ENCODE measurements at regions of chr20 and their contacts with region 1.

Region 1: GRCh38 chr20:17536944-17537444 is 5.8 kb upstream of the BFSP1 start:
- DNase-seq: peak; percentile 86
- H3K4me3 ChIP-seq: no peak overlapping the region
- H3K27ac ChIP-seq: no peak overlapping the region
- H3K4me1 ChIP-seq: peaks cover 3% of the 10 kb centered on the region
- H3K27me3 ChIP-seq: no peaks in the 10 kb centered on the region
- CTCF ChIP-seq: peak; percentile 85 to 86
- POLR2A ChIP-seq: no peak

Region 2: DNA sequence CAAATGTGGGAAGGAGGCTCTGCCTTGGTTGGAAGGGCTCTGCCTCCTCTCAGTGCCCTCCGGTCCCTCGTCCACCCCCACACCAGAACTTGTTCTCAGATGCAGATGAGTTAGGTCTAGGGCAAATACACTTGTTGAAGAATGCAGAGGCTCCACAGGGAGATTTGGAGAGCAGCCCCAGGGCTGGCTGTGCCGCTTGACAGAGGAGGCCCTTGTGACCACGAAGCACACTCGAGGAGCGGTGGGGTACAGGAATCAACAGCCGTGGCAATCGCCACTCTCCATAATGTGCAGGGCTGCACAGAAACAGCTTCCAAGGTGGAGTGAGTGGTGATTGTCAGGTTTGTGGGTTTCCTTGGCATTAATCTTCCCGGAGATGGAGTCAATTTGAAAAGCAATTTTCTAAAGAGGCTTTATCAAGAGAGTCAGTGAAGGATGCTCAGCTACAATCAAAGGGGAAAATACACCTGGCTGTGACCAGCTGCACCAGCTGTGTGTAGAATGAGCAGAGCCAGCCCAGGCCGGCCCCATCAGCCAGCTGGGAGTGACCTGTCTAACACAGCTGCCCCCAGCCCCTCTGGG is 65.3 kb before region 1 on chr20:
- CTCF ChIA-PET with region 1: no interaction called
- POLR2A ChIA-PET with region 1: no interaction called
- dilution Hi-C with region 1: no loop called
- intact Hi-C with region 1: no loop called
- DNase-seq: no peak
- H3K4me3 ChIP-seq: no peak overlapping the region
- H3K27ac ChIP-seq: no peak overlapping the region
- H3K4me1 ChIP-seq: no peaks in the 10 kb centered on the region
- H3K27me3 ChIP-seq: peaks cover 0 to 2% of the 10 kb centered on the region in 2 experiments
- CTCF ChIP-seq: no peak
- POLR2A ChIP-seq: no peak

Region 3: DNA sequence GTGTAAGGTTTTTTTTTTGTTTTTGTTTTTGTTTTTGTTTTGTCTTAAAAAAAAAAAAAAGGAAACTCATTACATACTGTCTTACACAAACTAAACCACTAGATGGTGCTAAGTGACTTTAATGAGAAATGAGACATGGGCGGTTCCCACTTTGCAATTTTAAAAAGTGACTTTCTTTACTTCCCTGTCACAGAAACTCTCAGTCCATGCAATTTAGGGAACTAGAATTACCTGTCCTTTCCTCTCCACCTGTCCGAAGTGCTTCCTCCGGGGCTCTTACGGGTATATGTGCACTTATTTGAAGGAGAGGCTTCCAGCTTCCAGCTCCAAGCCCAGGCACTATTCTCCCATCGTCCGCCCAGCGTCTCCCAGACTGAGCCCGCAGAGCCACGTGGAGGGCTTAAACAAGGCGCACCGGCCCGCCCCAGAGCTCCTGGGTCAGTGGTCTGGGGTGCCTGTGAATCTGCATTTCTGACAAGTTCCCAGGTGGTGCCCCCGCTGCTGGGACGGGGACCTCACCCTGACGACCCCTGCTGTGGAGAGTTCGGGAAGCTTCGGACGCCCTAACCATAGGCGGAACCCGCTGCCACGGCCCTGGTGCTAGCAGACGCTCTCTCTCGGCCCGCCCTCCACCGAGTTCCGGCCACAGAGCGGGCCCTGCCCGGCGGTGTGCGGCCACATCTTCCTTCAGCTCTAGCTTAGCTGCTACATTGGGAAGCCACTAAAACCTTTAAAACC is 31.9 kb before region 1 on chr20:
- CTCF ChIA-PET with region 1: interaction called, 44 read pairs
- POLR2A ChIA-PET with region 1: no interaction called
- dilution Hi-C with region 1: no loop called
- intact Hi-C with region 1: loop called (anchors 1 kb)
- DNase-seq: peak; percentile 72
- H3K4me3 ChIP-seq: peak overlapping the region; percentile 31 to 74 (median 58)
- H3K27ac ChIP-seq: peak overlapping the region; percentile 9
- H3K4me1 ChIP-seq: peaks cover 13% of the 10 kb centered on the region
- H3K27me3 ChIP-seq: no peaks in the 10 kb centered on the region
- CTCF ChIP-seq: peak; percentile 39 to 41
- POLR2A ChIP-seq: peak; percentile 61

Region 4: DNA sequence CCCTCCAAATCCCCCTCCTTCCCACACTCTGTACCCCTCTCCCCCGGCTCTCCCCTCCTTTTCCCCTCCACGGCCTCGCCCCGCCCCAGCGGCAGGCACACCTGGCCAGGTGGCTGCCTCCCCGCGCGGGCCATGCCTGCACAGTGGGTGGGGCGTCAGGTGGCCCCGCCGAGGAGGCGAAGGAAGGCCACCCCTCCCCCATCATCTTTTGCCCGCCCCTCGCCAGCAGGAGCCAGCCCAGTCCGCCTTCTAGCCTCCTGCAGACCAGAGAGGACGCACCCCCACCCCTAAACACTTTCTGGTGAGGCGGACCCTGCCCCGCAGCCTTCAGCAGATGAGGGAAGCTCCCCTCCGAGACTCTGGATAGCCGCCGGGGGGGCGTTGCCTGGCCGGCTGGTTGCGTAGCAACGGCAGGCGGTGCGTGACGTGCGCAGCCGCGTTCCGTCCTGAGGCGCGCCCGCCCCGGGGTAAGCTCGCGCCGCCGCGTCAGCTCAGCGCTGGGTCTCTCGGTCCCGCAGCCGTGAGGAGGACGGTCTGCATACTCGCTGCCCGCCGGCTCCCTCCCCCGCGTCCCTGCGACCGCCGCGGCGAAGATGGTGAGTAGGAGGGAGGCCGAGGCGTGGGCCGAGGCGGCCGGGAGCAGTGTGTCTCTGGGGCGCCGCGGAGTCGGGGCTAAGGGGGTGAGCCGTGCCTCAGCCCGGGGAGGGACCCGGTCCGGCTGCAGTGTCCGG is 32.8 kb after region 1 on chr20 and contains the start of gene DSTN:
- CTCF ChIA-PET with region 1: interaction called, 42 read pairs
- POLR2A ChIA-PET with region 1: interaction called, 8 read pairs
- dilution Hi-C with region 1: no loop called
- intact Hi-C with region 1: loop called (anchors 1 kb)
- DNase-seq: peak; percentile 95
- H3K4me3 ChIP-seq: peak within 1 kb of the TSS; percentile 84 to 92 (median 88)
- H3K27ac ChIP-seq: peak within 1 kb of the TSS; percentile 91
- H3K4me1 ChIP-seq: peaks cover 23% of the 10 kb centered on the region
- H3K27me3 ChIP-seq: no peaks in the 10 kb centered on the region
- CTCF ChIP-seq: no peak
- POLR2A ChIP-seq: peak; percentile 87
- total RNA-seq, gene DSTN: 300 and 307 TPM in 2 replicates

Region 5: DNA sequence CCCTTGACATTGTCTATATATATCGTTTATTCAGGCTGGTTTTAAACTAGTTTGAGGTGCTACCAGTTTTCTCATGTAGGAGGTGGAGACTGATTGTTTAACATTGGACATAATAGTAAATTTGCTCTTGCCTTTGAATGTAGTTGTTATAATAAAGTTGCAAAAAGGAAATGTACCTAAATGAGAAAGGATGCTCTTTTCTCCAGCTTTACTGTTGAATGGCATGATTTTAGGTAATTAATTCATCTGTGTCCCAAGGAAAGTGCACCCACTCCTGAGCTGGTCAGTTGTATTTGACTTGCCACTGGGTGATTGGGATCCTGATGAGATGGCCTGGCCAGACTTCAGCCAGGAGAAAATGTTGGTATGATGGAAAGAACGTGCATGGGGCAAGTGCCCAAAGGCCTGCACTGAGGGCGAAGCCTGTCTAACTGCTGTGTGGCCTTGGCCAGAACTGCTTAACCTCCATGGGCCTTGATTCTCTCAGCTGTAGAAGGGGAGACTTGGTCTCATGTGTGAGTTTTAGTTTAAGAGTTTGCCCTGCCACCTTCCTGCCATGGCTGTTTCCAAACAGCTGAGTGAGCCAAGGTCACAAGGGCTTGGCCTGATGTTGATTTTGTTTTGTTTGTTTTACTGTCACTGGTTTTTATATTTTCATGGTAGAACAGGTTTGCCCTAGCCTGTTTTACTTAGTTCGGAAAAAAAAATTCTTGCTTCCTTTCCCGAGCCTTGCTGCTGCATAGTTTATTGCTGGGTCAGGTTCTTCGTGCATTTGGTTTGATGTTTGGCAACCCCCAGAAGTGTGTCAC is 68.1 kb after region 1 on chr20:
- CTCF ChIA-PET with region 1: interaction called, 27 read pairs
- POLR2A ChIA-PET with region 1: no interaction called
- dilution Hi-C with region 1: no loop called
- intact Hi-C with region 1: no loop called
- DNase-seq: no peak
- H3K4me3 ChIP-seq: no peak overlapping the region
- H3K27ac ChIP-seq: no peak overlapping the region
- H3K4me1 ChIP-seq: no peaks in the 10 kb centered on the region
- H3K27me3 ChIP-seq: no peaks in the 10 kb centered on the region
- CTCF ChIP-seq: no peak
- POLR2A ChIP-seq: no peak

Region 6: GRCh38 chr20:17617551-17618223 is 80.7 kb after region 1 on chr20:
- CTCF ChIA-PET with region 1: interaction called, 89 read pairs
- POLR2A ChIA-PET with region 1: no interaction called
- dilution Hi-C with region 1: no loop called
- intact Hi-C with region 1: loop called (anchors 1 kb)
- DNase-seq: peak; percentile 24
- H3K4me3 ChIP-seq: no peak overlapping the region
- H3K27ac ChIP-seq: no peak overlapping the region
- H3K4me1 ChIP-seq: no peaks in the 10 kb centered on the region
- H3K27me3 ChIP-seq: no peaks in the 10 kb centered on the region
- CTCF ChIP-seq: peak; percentile 58 to 64
- POLR2A ChIP-seq: no peak

Region 7: GRCh38 chr20:17662333-17663039 is 125.5 kb after region 1 on chr20:
- CTCF ChIA-PET with region 1: no interaction called
- POLR2A ChIA-PET with region 1: no interaction called
- dilution Hi-C with region 1: no loop called
- intact Hi-C with region 1: no loop called
- DNase-seq: no peak
- H3K4me3 ChIP-seq: no peak overlapping the region
- H3K27ac ChIP-seq: no peak overlapping the region
- H3K4me1 ChIP-seq: peaks cover 26% of the 10 kb centered on the region
- H3K27me3 ChIP-seq: no peaks in the 10 kb centered on the region
- CTCF ChIP-seq: no peak
- POLR2A ChIP-seq: no peak

Region 8: GRCh38 chr20:17898548-17898994 is 361.6 kb after region 1 on chr20:
- CTCF ChIA-PET with region 1: interaction called, 11 read pairs
- POLR2A ChIA-PET with region 1: no interaction called
- dilution Hi-C with region 1: no loop called
- intact Hi-C with region 1: loop called (anchors 1 kb)
- DNase-seq: peak; percentile 70
- H3K4me3 ChIP-seq: no peak overlapping the region
- H3K27ac ChIP-seq: no peak overlapping the region
- H3K4me1 ChIP-seq: peaks cover 25% of the 10 kb centered on the region
- H3K27me3 ChIP-seq: peaks cover 4 to 5% of the 10 kb centered on the region in 2 experiments
- CTCF ChIP-seq: peak; percentile 81 to 86
- POLR2A ChIP-seq: no peak

Region 9: GRCh38 chr20:17995967-17996819 is 459.2 kb after region 1 on chr20:
- CTCF ChIA-PET with region 1: no interaction called
- POLR2A ChIA-PET with region 1: no interaction called
- dilution Hi-C with region 1: no loop called
- intact Hi-C with region 1: loop called (anchors 10 kb)
- DNase-seq: peak; percentile 70
- H3K4me3 ChIP-seq: no peak overlapping the region
- H3K27ac ChIP-seq: no peak overlapping the region
- H3K4me1 ChIP-seq: peaks cover 16% of the 10 kb centered on the region
- H3K27me3 ChIP-seq: peaks cover 0 to 4% of the 10 kb centered on the region in 2 experiments
- CTCF ChIP-seq: peak; percentile 85 to 86
- POLR2A ChIP-seq: no peak

Measured in endothelial cell of umbilical vein (primary cell).